ENCODE measurements at regions of chr12 and their contacts with region 1.

Region 1: GRCh38 chr12:117212563-117213190 is 22.4 kb upstream of the FBXO21 start:
- H3K4me3 ChIP-seq: no peak overlapping the region
- H3K27ac ChIP-seq: no peak overlapping the region
- H3K4me1 ChIP-seq: no peaks in the 10 kb centered on the region
- CTCF ChIP-seq: peak; percentile 68

Region 2: DNA sequence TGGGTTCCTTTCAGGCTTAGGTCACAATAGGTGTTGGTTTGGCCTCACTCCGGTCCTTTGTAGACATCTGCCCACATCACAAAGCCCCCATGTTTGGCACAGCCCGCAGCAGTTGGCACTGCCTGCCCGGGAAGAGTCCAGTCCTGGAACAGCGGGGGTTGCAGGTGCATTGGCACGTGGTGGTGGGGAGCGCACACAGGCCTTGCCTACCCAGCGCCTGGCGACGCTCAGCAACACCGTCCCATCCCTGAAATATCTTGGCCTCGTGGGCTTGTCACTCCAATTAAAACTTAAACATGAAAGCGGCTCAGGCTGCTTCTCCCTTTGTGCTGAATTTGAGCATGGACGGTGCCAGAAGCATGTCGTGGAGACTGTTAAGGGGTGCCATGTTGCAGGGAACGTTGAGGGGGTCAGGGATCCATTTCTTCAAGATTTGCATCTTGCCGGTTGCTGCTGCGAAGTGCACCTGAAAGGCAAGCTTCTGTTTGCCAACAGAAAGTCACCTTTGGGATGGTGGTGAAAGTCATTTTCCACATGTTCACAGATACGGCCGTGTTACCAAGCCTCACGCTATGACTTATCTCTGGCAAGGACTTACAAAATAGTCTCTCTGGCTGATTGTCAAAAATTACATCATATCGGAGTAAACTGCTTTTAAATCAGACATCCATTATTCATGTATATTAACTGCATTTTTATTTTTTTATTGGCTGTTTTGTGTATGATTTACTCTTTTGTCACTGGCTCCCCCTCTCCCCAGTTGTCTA is 210.4 kb before region 1 on chr12:
- CTCF ChIA-PET with region 1: no interaction called
- POLR2A ChIA-PET with region 1: no interaction called
- H3K4me3 ChIP-seq: no peak overlapping the region
- H3K27ac ChIP-seq: no peak overlapping the region
- H3K4me1 ChIP-seq: no peaks in the 10 kb centered on the region
- CTCF ChIP-seq: no peak

Region 3: GRCh38 chr12:117190210-117190781 is 22.4 kb before region 1 on chr12 and contains the start of gene FBXO21:
- CTCF ChIA-PET with region 1: interaction called, 16 read pairs
- POLR2A ChIA-PET with region 1: no interaction called
- H3K4me3 ChIP-seq: peak within 1 kb of the TSS; percentile 100
- H3K27ac ChIP-seq: peak within 1 kb of the TSS; percentile 63; the same call in 1 of the 2 replicates
- H3K4me1 ChIP-seq: no peaks in the 10 kb centered on the region
- CTCF ChIP-seq: 0 out of 2 replicates have a peak, but pooled peaks have one; percentile 40

Region 4: GRCh38 chr12:117228239-117228638 is 15.6 kb after region 1 on chr12:
- CTCF ChIA-PET with region 1: interaction called, 19 read pairs
- POLR2A ChIA-PET with region 1: no interaction called
- H3K4me3 ChIP-seq: no peak overlapping the region
- H3K27ac ChIP-seq: no peak overlapping the region
- H3K4me1 ChIP-seq: no peaks in the 10 kb centered on the region
- CTCF ChIP-seq: no peak

Region 5: GRCh38 chr12:117587631-117588287 is 375.1 kb after region 1 on chr12:
- CTCF ChIA-PET with region 1: interaction called, 18 read pairs
- POLR2A ChIA-PET with region 1: no interaction called
- H3K4me3 ChIP-seq: no peak overlapping the region
- H3K27ac ChIP-seq: no peak overlapping the region
- H3K4me1 ChIP-seq: no peaks in the 10 kb centered on the region
- CTCF ChIP-seq: peak; percentile 77

Region 6: GRCh38 chr12:117850048-117850447 is 637.4 kb after region 1 on chr12:
- CTCF ChIA-PET with region 1: interaction called, 37 read pairs
- POLR2A ChIA-PET with region 1: no interaction called
- H3K4me3 ChIP-seq: no peak overlapping the region
- H3K27ac ChIP-seq: no peak overlapping the region
- H3K4me1 ChIP-seq: no peaks in the 10 kb centered on the region
- CTCF ChIP-seq: peak; percentile 45; the same call in 1 of the 2 replicates

Measured in HEK293 (cell line).